ENCODE measurements at regions of chrX and their contacts with region 1.

Region 1: GRCh38 chrX:77174680-77175519 is 272.3 kb upstream of the FGF16 start:
- DNase-seq: peak in 1 of 2 donors; percentile 66
- H3K4me3 ChIP-seq: no peak overlapping the region
- H3K27ac ChIP-seq: peak overlapping the region in 1 of 2 donors; percentile 29
- H3K4me1 ChIP-seq: no peaks in the 10 kb centered on the region
- H3K27me3 ChIP-seq: no peaks in the 10 kb centered on the region
- CTCF ChIP-seq: no peak

Region 2: GRCh38 chrX:77223046-77223445 is 48.1 kb after region 1 on chrX:
- intact Hi-C with region 1: no loop called
- DNase-seq: no peak
- H3K4me3 ChIP-seq: no peak overlapping the region
- H3K27ac ChIP-seq: no peak overlapping the region
- H3K4me1 ChIP-seq: no peaks in the 10 kb centered on the region
- H3K27me3 ChIP-seq: no peaks in the 10 kb centered on the region
- CTCF ChIP-seq: no peak

Region 3: GRCh38 chrX:77347572-77347971 is 172.7 kb after region 1 on chrX:
- intact Hi-C with region 1: loop called (anchors 5 kb)
- DNase-seq: no peak
- H3K4me3 ChIP-seq: no peak overlapping the region
- H3K27ac ChIP-seq: peak overlapping the region; percentile 51 to 70
- H3K4me1 ChIP-seq: peaks cover 0 to 6% of the 10 kb centered on the region in 2 donors
- H3K27me3 ChIP-seq: no peaks in the 10 kb centered on the region
- CTCF ChIP-seq: no peak